B cell (primary cell): ENCODE measurements at regions of chr7 and their contacts with region 1.

Region 1: DNA sequence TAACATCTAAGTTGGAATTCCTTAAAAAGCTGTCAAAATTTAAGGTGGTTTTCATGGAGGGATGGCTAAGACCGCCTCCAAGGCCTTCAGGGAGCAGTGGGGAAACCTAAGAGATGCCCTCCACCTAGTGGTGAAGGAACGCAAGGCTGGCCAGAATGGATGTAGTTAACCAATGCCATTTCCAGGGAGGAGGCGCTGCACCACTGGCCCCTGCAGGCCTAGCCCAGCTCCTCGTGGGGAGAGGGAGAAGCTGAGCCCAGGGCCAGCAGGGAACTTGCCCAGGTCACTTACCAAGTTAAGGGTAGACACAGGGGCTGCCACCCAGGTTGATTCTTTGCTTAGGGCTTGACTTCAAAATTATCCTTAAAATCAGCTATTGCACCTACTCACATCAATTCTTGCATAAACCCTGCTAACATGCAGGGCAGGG is 32.0 kb downstream of the FIGNL1 start:
- DNase-seq: peak; percentile 82
- ATAC-seq: peak; percentile 78
- H3K4me3 ChIP-seq: no peak overlapping the region
- H3K4me3 Mint-ChIP-seq: no peak overlapping the region
- H3K27ac ChIP-seq: no peak overlapping the region
- H3K27ac Mint-ChIP-seq: no peak overlapping the region
- H3K4me1 ChIP-seq: peaks cover 49 to 51% of the 10 kb centered on the region in 2 donors
- H3K4me1 Mint-ChIP-seq: peaks cover 54% of the 10 kb centered on the region
- H3K27me3 ChIP-seq: no peaks in the 10 kb centered on the region
- H3K27me3 Mint-ChIP-seq: no peaks in the 10 kb centered on the region
- CTCF ChIP-seq: peak; percentile 88

Region 2: GRCh38 chr7:50119815-50120637 is 298.1 kb before region 1 on chr7:
- CTCF ChIA-PET with region 1: interaction called, 8 read pairs
- POLR2A ChIA-PET with region 1: no interaction called
- intact Hi-C with region 1: loop called (anchors 1 kb)
- DNase-seq: peak; percentile 57
- ATAC-seq: peak; percentile 83
- H3K4me3 ChIP-seq: no peak overlapping the region
- H3K4me3 Mint-ChIP-seq: peak overlapping the region; percentile 26
- H3K27ac ChIP-seq: peak overlapping the region in 1 of 2 donors; percentile 60
- H3K27ac Mint-ChIP-seq: no peak overlapping the region
- H3K4me1 ChIP-seq: peaks cover 20 to 21% of the 10 kb centered on the region in 2 donors
- H3K4me1 Mint-ChIP-seq: peaks cover 22% of the 10 kb centered on the region
- H3K27me3 ChIP-seq: no peaks in the 10 kb centered on the region
- H3K27me3 Mint-ChIP-seq: no peaks in the 10 kb centered on the region
- CTCF ChIP-seq: peak; percentile 69

Region 3: DNA sequence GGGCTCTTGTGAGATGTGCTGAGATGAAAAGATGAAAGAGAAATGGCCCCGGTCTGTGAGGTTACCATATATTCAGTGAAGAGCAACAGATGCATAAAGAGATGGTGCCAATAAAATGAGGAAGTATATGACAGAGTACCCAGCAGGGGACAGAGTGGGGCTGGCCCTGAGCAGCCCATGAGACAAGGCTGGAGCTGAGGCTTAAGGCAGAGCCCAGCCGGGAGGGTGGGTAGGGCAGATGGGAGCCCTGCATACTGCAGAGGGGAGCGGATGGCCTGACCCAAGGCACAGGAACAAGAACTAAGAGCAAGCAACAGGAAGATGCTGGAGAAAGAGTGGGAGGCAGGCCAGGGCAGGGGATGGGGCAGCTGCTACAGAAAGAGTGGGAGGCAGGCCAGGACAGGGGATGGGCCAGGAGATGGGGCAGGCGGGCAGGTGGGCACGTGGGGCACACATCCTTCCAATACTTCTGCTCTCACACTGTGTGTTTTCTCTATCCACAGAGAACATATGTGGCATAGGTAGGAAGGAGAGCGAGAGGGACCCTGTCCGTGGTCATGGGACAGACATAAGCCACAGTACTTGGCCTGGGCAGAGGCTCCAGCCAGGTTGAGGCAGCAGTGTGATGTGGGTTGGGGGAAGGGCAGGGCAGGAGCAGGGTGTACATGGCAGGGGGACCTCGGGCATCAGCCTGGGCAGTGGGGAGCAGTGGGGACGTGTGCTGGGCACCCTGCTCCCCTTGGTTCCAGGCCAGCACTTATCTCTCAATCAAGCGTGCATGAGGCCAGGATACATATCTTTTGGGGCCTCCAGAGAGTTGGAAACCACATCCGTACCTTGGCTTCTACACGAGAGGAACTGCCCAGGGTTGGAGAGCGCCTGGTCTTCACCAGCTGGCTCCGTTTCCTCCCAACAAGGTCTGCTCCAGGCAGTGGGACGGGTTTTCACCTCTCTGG is 205.2 kb before region 1 on chr7:
- CTCF ChIA-PET with region 1: interaction called, 211 read pairs
- POLR2A ChIA-PET with region 1: no interaction called
- intact Hi-C with region 1: no loop called
- DNase-seq: peak; percentile 63
- ATAC-seq: peak; percentile 87
- H3K4me3 ChIP-seq: no peak overlapping the region
- H3K4me3 Mint-ChIP-seq: peak overlapping the region; percentile 20
- H3K27ac ChIP-seq: no peak overlapping the region
- H3K27ac Mint-ChIP-seq: peak overlapping the region; percentile 59
- H3K4me1 ChIP-seq: peaks cover 24 to 28% of the 10 kb centered on the region in 2 donors
- H3K4me1 Mint-ChIP-seq: peaks cover 37% of the 10 kb centered on the region
- H3K27me3 ChIP-seq: no peaks in the 10 kb centered on the region
- H3K27me3 Mint-ChIP-seq: no peaks in the 10 kb centered on the region
- CTCF ChIP-seq: no peak

Region 4: GRCh38 chr7:50304158-50304910 is 113.8 kb before region 1 on chr7 and contains the start of gene IKZF1:
- CTCF ChIA-PET with region 1: interaction called, 41 read pairs
- POLR2A ChIA-PET with region 1: interaction called, 4 read pairs
- intact Hi-C with region 1: loop called (anchors 5 kb)
- DNase-seq: peak; percentile 89
- ATAC-seq: peak; percentile 50
- H3K4me3 ChIP-seq: peak within 1 kb of the TSS; percentile 74 to 99 (median 87)
- H3K4me3 Mint-ChIP-seq: peak within 1 kb of the TSS; percentile 91
- H3K27ac ChIP-seq: peak within 1 kb of the TSS; percentile 71 to 83
- H3K27ac Mint-ChIP-seq: peak within 1 kb of the TSS; percentile 94
- H3K4me1 ChIP-seq: peaks cover 18 to 32% of the 10 kb centered on the region in 2 donors
- H3K4me1 Mint-ChIP-seq: peaks cover 36% of the 10 kb centered on the region
- H3K27me3 ChIP-seq: no peaks in the 10 kb centered on the region
- H3K27me3 Mint-ChIP-seq: no peaks in the 10 kb centered on the region
- CTCF ChIP-seq: peak; percentile 11
- total RNA-seq, gene IKZF1: 254 and 261 TPM in 2 replicates

Region 5: DNA sequence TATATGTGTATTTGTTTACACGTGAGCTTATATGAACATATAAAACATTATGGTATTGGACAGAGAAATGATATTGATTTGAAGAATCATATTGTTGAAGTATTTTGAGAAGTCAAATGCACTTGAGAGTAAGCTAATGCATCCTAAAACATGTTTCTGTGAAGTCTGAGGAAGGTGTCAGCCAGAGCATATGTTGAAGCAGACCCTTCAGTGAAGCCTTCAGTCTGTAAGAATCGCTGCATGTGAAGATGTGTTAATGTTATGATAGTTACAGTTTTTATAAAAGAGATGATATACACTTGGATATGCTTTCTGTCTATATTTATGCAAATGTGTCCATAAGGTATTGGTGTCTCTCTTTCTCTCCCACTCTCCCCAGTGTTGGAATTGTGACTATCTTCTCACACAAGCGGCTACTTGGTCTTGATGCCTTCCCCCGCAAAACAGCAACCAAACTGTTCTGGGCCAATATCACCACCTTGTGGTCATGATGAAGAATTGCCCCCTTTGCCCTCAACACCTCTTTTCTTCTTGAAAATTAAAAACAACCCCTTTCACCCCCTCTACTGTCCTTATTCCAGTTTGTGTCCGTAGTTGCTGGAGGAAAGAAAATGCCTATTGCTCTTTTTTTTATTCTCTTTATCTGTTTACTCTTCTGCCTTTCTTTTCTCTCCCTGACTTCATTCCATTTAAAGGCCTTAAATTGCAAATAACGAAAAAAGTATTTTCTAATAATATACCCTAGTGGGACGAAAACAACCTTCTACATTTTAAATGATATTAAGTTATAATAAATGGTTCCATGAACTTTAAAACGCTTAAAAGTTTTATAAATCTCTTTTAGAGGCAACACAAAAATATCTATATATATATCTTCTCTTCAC is 48.7 kb before region 1 on chr7:
- CTCF ChIA-PET with region 1: interaction called, 182 read pairs
- POLR2A ChIA-PET with region 1: interaction called, 5 read pairs
- intact Hi-C with region 1: loop called (anchors 1 kb)
- DNase-seq: peak; percentile 83
- ATAC-seq: peak; percentile 70
- H3K4me3 ChIP-seq: no peak overlapping the region
- H3K4me3 Mint-ChIP-seq: no peak overlapping the region
- H3K27ac ChIP-seq: peak overlapping the region in 1 of 2 donors; percentile 71
- H3K27ac Mint-ChIP-seq: peak overlapping the region; percentile 74
- H3K4me1 ChIP-seq: peaks cover 35 to 58% of the 10 kb centered on the region in 2 donors
- H3K4me1 Mint-ChIP-seq: peaks cover 91% of the 10 kb centered on the region
- H3K27me3 ChIP-seq: no peaks in the 10 kb centered on the region
- H3K27me3 Mint-ChIP-seq: no peaks in the 10 kb centered on the region
- CTCF ChIP-seq: peak; percentile 92

Region 6: GRCh38 chr7:50397320-50397970 is 20.7 kb before region 1 on chr7:
- CTCF ChIA-PET with region 1: interaction called, 39 read pairs
- POLR2A ChIA-PET with region 1: interaction called, 28 read pairs
- intact Hi-C with region 1: no loop called
- DNase-seq: peak; percentile 60
- ATAC-seq: no peak
- H3K4me3 ChIP-seq: peak overlapping the region in 1 of 5 experiments; percentile 23
- H3K4me3 Mint-ChIP-seq: peak overlapping the region; percentile 75
- H3K27ac ChIP-seq: peak overlapping the region; percentile 86 to 94
- H3K27ac Mint-ChIP-seq: peak overlapping the region; percentile 97
- H3K4me1 ChIP-seq: peaks cover 65 to 70% of the 10 kb centered on the region in 2 donors
- H3K4me1 Mint-ChIP-seq: peaks cover 77% of the 10 kb centered on the region
- H3K27me3 ChIP-seq: no peaks in the 10 kb centered on the region
- H3K27me3 Mint-ChIP-seq: no peaks in the 10 kb centered on the region
- CTCF ChIP-seq: no peak

Region 7: GRCh38 chr7:50739744-50740435 is 321.8 kb after region 1 on chr7:
- CTCF ChIA-PET with region 1: no interaction called
- POLR2A ChIA-PET with region 1: no interaction called
- intact Hi-C with region 1: no loop called
- DNase-seq: peak; percentile 62
- ATAC-seq: peak; percentile 53
- H3K4me3 ChIP-seq: no peak overlapping the region
- H3K4me3 Mint-ChIP-seq: peak overlapping the region; percentile 20
- H3K27ac ChIP-seq: no peak overlapping the region
- H3K27ac Mint-ChIP-seq: no peak overlapping the region
- H3K4me1 ChIP-seq: peaks cover 6 to 9% of the 10 kb centered on the region in 2 donors
- H3K4me1 Mint-ChIP-seq: peaks cover 7% of the 10 kb centered on the region
- H3K27me3 ChIP-seq: no peaks in the 10 kb centered on the region
- H3K27me3 Mint-ChIP-seq: peaks cover 8% of the 10 kb centered on the region
- CTCF ChIP-seq: no peak